Breast epithelium (tissue), 4 donors: ENCODE measurements at regions of chr6 and their contacts with region 1.

Region 1: GRCh38 chr6:37175332-37176267 is 5.6 kb downstream of the PIM1 start:
- DNase-seq: no peak
- H3K4me3 ChIP-seq: no peak overlapping the region
- H3K27ac ChIP-seq: no peak overlapping the region
- H3K4me1 ChIP-seq: peaks cover 0 to 7% of the 10 kb centered on the region in 2 donors
- H3K27me3 ChIP-seq: no peaks in the 10 kb centered on the region
- CTCF ChIP-seq: no peak
- POLR2A ChIP-seq: no peak

Region 2: DNA sequence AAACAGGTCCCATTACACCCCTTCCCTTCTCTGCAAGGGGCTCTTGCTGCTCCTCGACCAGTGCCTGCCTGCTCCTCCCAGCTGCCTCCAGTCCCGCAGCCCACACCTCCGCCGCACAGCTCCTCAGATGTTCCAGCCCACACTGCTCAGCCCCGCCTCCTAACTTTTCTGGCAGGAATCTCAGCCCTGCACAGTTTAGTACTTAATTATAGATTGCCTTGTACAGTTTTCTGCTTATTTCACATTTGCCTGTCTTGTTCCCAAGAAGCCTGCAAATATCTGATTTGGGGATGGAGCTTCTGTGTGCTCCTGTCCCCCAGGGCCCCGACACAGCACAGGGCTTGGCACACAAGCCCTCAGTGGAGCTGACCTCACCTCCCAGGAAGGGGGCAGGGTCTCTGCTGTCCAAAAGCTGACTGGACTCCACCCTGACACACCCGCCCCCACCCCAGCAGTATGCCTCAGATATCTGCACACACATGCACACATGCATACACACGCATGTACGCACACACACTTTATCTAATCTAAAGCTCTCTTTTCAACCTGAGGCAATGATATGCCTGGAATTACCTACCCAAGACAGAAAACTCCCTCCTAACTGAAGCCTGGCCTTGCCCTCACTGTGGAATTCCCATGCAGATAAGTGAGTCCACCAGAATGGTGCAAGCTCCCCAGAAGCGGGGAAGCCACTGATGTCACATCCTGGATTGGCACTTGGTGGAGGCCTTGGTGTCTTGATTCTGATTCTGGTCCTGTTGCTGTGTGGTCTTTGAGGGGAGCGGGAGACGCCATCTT is 906.9 kb before region 1 on chr6:
- intact Hi-C with region 1: no loop called
- DNase-seq: no peak
- H3K4me3 ChIP-seq: no peak overlapping the region
- H3K27ac ChIP-seq: no peak overlapping the region
- H3K4me1 ChIP-seq: no peaks in the 10 kb centered on the region
- H3K27me3 ChIP-seq: peaks cover 0 to 11% of the 10 kb centered on the region in 2 donors
- CTCF ChIP-seq: no peak
- POLR2A ChIP-seq: no peak

Region 3: DNA sequence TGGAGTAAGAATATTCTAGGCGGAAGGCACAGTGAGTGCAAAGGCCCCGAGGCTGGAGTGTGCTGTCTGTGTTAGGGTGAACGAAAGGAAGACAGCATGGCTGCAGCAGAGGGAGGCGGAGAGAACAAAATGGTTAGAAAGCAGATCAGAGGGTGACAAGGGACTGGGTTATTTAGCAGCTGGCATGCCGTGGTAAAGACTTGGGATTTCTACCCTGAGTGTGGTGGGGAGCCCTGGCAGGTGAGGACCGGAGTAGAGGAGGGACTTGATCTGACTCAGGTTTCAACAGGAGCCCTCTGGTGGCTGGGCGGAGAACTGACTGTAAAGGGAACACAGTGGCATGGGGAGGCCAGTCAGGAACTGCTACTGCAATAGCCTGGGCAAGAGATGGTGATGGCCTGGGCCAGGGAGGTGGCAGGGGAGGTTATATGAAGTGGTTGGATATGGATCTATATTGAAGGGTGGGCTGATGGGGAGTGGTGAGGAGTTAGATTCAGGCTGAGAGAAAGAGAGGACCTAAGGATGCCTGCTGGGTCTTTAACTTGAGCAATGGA is 32.4 kb after region 1 on chr6:
- intact Hi-C with region 1: loop called (anchors 2 kb)
- DNase-seq: peak; percentile 61 to 77
- H3K4me3 ChIP-seq: no peak overlapping the region
- H3K27ac ChIP-seq: no peak overlapping the region
- H3K4me1 ChIP-seq: no peaks in the 10 kb centered on the region
- H3K27me3 ChIP-seq: no peaks in the 10 kb centered on the region
- CTCF ChIP-seq: peak; percentile 34 to 53 (median 49)
- POLR2A ChIP-seq: no peak